ENCODE measurements at regions of chr10 and their contacts with region 1.

Region 1: GRCh38 chr10:32005050-32005449 is 51.2 kb downstream of the KIF5B start:
- DNase-seq: peak; percentile 25
- H3K4me3 ChIP-seq: no peak overlapping the region
- H3K27ac ChIP-seq: no peak overlapping the region
- H3K4me1 ChIP-seq: no peaks in the 10 kb centered on the region
- H3K27me3 ChIP-seq: no peaks in the 10 kb centered on the region
- CTCF ChIP-seq: peak; percentile 58 to 65

Region 2: GRCh38 chr10:30722956-30723620 is 1282.0 kb before region 1 on chr10:
- CTCF ChIA-PET with region 1: no interaction called
- dilution Hi-C with region 1: no loop called
- in situ Hi-C with region 1: no loop called
- intact Hi-C with region 1: loop called (anchors 10 kb)
- DNase-seq: no peak
- H3K4me3 ChIP-seq: no peak overlapping the region
- H3K27ac ChIP-seq: no peak overlapping the region
- H3K4me1 ChIP-seq: peaks cover 3% of the 10 kb centered on the region
- H3K27me3 ChIP-seq: no peaks in the 10 kb centered on the region
- CTCF ChIP-seq: no peak

Region 3: DNA sequence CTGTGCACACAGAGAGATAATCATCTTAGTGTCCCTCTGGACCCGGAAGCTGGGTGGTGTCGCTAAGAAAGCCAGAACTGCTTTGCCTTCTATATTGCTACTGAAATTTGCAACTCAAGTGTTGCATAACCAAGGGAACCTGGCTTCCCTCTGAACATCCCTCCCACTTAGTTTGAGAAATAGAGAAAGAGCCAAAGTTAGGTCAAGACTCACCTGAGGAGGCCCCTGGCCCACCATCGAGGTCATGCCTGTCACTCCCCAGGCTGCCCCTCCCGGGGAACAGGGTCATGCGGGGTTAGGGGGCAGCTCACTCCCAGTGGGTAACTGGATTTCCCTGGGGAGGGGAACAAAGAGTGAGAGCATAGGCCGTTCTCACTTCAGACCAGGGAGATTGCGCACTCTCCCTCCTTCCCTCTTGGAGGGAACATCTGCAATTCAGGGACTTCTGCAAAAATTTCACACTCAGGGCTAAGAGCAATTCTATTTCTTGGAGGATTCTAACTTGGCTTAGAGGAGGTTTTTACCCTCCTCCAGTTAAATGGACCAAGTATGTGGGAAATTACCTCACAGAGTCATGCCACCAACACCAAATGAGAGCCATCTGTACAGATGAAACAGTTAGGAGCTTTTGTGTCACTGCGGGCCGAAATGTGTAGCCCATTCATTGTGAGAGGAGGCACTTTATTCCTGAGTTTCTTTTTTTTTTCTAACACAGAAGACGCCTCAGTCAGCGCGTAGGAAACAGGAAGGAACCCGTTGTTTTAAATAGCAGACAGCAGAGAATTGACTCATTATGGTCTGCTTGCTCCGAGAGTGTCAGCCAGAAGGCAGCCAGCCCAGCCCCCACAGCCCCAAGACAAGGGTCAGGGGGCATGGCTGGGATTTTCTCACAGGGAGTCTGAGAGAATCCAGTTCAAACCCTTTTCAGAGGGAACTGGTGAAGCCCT is 297.7 kb before region 1 on chr10:
- CTCF ChIA-PET with region 1: no interaction called
- dilution Hi-C with region 1: no loop called
- in situ Hi-C with region 1: no loop called
- intact Hi-C with region 1: loop called (anchors 2 kb)
- DNase-seq: peak; percentile 32
- H3K4me3 ChIP-seq: no peak overlapping the region
- H3K27ac ChIP-seq: no peak overlapping the region
- H3K4me1 ChIP-seq: no peaks in the 10 kb centered on the region
- H3K27me3 ChIP-seq: no peaks in the 10 kb centered on the region
- CTCF ChIP-seq: no peak

Region 4: DNA sequence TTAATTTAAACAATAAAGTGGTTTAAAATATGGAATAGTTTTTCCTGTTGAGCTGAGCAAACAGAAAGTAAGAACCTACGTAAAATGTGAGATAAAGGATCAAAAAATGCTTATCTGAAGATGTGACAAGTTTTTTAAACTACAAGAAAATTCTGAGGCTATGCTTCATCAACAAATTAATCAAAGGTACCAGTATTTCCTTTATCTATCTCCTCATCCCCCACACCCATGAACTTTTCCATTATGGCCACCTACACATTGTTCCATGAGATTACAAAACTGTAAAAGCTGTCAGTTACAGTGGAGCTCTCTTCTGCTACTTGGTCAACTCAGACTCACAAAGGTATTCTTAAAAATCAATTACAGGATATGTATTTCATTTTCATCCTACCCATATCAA is 153.8 kb before region 1 on chr10:
- CTCF ChIA-PET with region 1: no interaction called
- dilution Hi-C with region 1: no loop called
- in situ Hi-C with region 1: loop called in 1 of 2 experiments (anchors 10 kb)
- intact Hi-C with region 1: no loop called
- DNase-seq: no peak
- H3K4me3 ChIP-seq: no peak overlapping the region
- H3K27ac ChIP-seq: no peak overlapping the region
- H3K4me1 ChIP-seq: no peaks in the 10 kb centered on the region
- H3K27me3 ChIP-seq: no peaks in the 10 kb centered on the region
- CTCF ChIP-seq: no peak

Region 5: GRCh38 chr10:31864834-31865518 is 140.1 kb before region 1 on chr10:
- CTCF ChIA-PET with region 1: interaction called, 5 read pairs
- dilution Hi-C with region 1: no loop called
- in situ Hi-C with region 1: no loop called
- intact Hi-C with region 1: loop called (anchors 2 kb)
- DNase-seq: no peak
- H3K4me3 ChIP-seq: no peak overlapping the region
- H3K27ac ChIP-seq: no peak overlapping the region
- H3K4me1 ChIP-seq: peaks cover 6% of the 10 kb centered on the region
- H3K27me3 ChIP-seq: no peaks in the 10 kb centered on the region
- CTCF ChIP-seq: no peak

Region 6: DNA sequence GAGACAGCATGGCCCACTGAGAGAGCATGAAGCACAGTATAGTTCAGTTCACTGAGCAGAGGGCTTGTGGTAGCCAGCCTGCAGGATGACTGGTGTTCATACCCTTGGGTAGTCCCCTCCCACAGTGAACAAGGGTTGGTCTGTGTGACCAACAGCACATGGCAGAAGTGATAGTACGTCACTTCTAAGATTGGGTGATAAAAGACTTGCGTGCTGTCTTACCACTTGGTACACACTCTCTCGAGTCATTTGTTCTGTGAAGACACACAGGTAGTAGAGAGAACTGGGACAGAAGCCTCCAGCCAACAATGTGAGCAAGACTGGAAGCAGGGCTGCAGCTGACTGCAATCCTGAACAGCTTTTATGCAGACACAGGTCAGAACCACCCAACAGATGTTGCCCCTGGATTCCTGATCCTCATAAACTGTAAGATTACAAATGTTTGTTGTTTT is 327.3 kb after region 1 on chr10:
- CTCF ChIA-PET with region 1: no interaction called
- dilution Hi-C with region 1: no loop called
- in situ Hi-C with region 1: no loop called
- intact Hi-C with region 1: no loop called
- DNase-seq: peak; percentile 75
- H3K4me3 ChIP-seq: no peak overlapping the region
- H3K27ac ChIP-seq: no peak overlapping the region
- H3K4me1 ChIP-seq: peaks cover 11% of the 10 kb centered on the region
- H3K27me3 ChIP-seq: no peaks in the 10 kb centered on the region
- CTCF ChIP-seq: no peak